CD4-positive, alpha-beta memory T cell (primary cell): ENCODE measurements at regions of chr12 and their contacts with region 1.

Region 1: GRCh38 chr12:107372229-107372658 is 278.9 kb upstream of the CRY1 start:
- DNase-seq: peak; percentile 64 to 78 (median 70)
- H3K4me3 ChIP-seq: peak overlapping the region; percentile 25 to 27
- H3K4me3 Mint-ChIP-seq: peak overlapping the region; percentile 57 to 89 (median 78)
- H3K27ac ChIP-seq: peak overlapping the region; percentile 62
- H3K27ac Mint-ChIP-seq: peak overlapping the region; percentile 88 to 94 (median 91)
- H3K4me1 ChIP-seq: peaks cover 77% of the 10 kb centered on the region
- H3K4me1 Mint-ChIP-seq: peaks cover 60 to 90% (median 77%) of the 10 kb centered on the region in 4 donors
- H3K27me3 ChIP-seq: no peaks in the 10 kb centered on the region
- H3K27me3 Mint-ChIP-seq: no peaks in the 10 kb centered on the region

Region 2: DNA sequence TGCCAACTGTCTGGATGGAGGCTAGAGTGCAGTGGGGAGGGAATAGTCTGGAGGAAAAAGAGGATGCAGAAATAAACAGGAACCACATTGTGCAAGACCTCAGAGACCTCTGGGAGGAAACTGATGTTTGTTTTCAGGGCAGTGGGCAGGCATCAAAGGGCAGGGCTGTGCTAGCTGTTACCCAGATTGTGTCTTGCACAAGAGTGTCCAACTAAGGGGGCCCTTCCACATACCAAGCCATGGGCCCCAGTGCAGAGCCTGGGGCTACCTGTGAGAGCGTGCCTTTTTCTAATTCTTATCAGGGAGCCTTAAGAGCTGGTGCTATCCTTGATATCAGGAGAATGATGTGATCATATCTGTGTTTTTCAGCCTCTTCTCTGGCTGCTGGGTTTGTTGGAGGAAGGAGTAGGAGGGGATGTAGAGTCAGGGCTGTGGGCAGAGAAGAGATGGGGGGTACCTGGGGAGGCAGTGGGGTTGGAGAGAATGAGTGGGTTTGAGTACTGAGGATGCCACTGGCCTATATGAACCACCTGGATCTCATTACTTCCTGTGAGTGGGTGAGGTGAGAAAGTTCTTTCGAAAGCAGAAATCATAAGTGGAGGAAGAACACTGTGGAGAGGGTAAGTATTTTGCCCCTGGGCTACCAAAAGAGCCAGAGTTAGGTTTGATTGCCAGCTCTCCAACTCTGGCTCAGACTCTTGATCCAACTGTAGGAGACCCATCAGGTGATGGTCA is 19.7 kb before region 1 on chr12:
- CTCF ChIA-PET with region 1: interaction called, 3 read pairs
- POLR2A ChIA-PET with region 1: interaction called, 7 read pairs
- intact Hi-C with region 1: loop called (anchors 2 kb)
- DNase-seq: peak in 1 of 5 donors; percentile 21
- H3K4me3 ChIP-seq: no peak overlapping the region
- H3K4me3 Mint-ChIP-seq: peak overlapping the region in 6 of 8 donors; percentile 28 to 72 (median 51)
- H3K27ac ChIP-seq: no peak overlapping the region
- H3K27ac Mint-ChIP-seq: peak overlapping the region in 6 of 7 donors; percentile 38 to 90 (median 48)
- H3K4me1 ChIP-seq: peaks cover 35% of the 10 kb centered on the region
- H3K4me1 Mint-ChIP-seq: peaks cover 20 to 69% (median 45%) of the 10 kb centered on the region in 4 donors
- H3K27me3 ChIP-seq: no peaks in the 10 kb centered on the region
- H3K27me3 Mint-ChIP-seq: no peaks in the 10 kb centered on the region

Region 3: GRCh38 chr12:107361970-107362369 is 10.3 kb before region 1 on chr12:
- CTCF ChIA-PET with region 1: interaction called, 10 read pairs
- POLR2A ChIA-PET with region 1: interaction called, 7 read pairs
- intact Hi-C with region 1: no loop called
- DNase-seq: no peak
- H3K4me3 ChIP-seq: no peak overlapping the region
- H3K4me3 Mint-ChIP-seq: no peak overlapping the region
- H3K27ac ChIP-seq: no peak overlapping the region
- H3K27ac Mint-ChIP-seq: no peak overlapping the region
- H3K4me1 ChIP-seq: no peaks in the 10 kb centered on the region
- H3K4me1 Mint-ChIP-seq: peaks cover 4 to 31% (median 21%) of the 10 kb centered on the region in 4 donors
- H3K27me3 ChIP-seq: no peaks in the 10 kb centered on the region
- H3K27me3 Mint-ChIP-seq: no peaks in the 10 kb centered on the region

Region 4: GRCh38 chr12:107393043-107393717 is 20.9 kb after region 1 on chr12:
- CTCF ChIA-PET with region 1: interaction called, 5 read pairs
- POLR2A ChIA-PET with region 1: interaction called, 11 read pairs
- intact Hi-C with region 1: no loop called
- DNase-seq: no peak
- H3K4me3 ChIP-seq: no peak overlapping the region
- H3K4me3 Mint-ChIP-seq: peak overlapping the region in 4 of 8 donors; percentile 31 to 72 (median 53)
- H3K27ac ChIP-seq: no peak overlapping the region
- H3K27ac Mint-ChIP-seq: peak overlapping the region in 6 of 7 donors; percentile 38 to 80 (median 72)
- H3K4me1 ChIP-seq: peaks cover 45% of the 10 kb centered on the region
- H3K4me1 Mint-ChIP-seq: peaks cover 41 to 82% (median 60%) of the 10 kb centered on the region in 4 donors
- H3K27me3 ChIP-seq: no peaks in the 10 kb centered on the region
- H3K27me3 Mint-ChIP-seq: no peaks in the 10 kb centered on the region

Region 5: DNA sequence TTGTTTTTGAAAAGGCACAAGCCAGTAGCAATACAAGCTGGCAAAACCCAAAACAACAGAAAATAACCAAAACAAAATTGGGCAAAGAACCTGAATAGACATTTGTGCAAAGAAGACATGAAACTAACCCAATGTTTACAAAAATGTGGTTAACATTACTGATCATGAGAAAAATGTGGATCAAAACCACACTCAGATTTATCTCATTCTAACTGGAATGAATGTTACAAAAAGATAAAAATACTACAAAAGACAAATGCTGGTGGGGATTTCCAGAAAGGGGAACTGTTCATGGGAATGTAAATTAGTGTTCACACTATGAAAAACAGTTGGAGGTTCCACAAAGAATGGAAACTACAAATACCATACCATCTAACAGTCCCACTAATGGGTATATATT is 428.9 kb after region 1 on chr12:
- CTCF ChIA-PET with region 1: no interaction called
- POLR2A ChIA-PET with region 1: no interaction called
- intact Hi-C with region 1: no loop called
- DNase-seq: no peak
- H3K4me3 ChIP-seq: no peak overlapping the region
- H3K4me3 Mint-ChIP-seq: no peak overlapping the region
- H3K27ac ChIP-seq: no peak overlapping the region
- H3K27ac Mint-ChIP-seq: no peak overlapping the region
- H3K4me1 ChIP-seq: no peaks in the 10 kb centered on the region
- H3K4me1 Mint-ChIP-seq: no peaks in the 10 kb centered on the region
- H3K27me3 ChIP-seq: no peaks in the 10 kb centered on the region
- H3K27me3 Mint-ChIP-seq: peaks cover 10 to 16% of the 10 kb centered on the region in 2 donors